Left colon (tissue), 2 donors: ENCODE measurements at regions of chr12 and their contacts with region 1.

Region 1: DNA sequence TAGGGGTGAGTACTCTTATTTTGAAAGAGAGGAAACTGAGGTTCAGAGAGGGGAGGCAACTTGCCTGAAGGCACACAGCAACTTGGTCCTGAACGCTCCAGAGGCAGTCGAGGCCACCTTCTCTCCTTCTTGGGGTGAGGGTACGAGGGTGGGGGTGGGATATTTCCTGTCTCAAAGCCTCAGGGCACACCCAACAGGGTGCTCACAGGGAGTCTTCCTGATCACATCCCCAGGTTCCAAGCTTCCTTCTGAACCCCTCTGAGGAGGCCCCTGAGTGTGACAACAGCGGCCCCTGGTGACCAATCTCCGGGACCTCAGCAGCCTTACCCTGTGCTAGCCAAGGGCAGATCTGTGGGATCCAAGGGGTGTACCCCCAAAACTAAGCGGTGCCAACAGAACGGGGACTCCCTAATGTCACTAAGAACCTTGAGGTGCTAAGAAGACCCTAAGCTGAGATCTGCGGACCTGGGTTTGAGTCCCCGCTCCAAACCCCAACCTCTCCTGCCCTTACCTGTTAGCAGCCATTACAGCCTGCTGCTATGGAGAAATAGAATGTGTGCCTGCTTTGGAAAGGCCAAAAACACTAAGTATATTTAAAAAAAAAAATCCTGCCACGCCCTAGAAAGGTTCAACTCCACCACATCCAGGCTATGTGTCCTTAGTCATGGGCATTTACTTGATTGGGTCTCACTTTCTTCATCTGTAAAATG is 57.9 kb downstream of the TRPV4 start:
- DNase-seq: peak; percentile 62 to 83
- ATAC-seq: peak; percentile 80

Region 2: GRCh38 chr12:109518820-109519665 is 256.3 kb before region 1 on chr12:
- intact Hi-C with region 1: loop called in 1 of 2 experiments (anchors 10 kb)
- DNase-seq: peak in 1 of 2 donors; percentile 74
- ATAC-seq: peak; percentile 82

Region 3: DNA sequence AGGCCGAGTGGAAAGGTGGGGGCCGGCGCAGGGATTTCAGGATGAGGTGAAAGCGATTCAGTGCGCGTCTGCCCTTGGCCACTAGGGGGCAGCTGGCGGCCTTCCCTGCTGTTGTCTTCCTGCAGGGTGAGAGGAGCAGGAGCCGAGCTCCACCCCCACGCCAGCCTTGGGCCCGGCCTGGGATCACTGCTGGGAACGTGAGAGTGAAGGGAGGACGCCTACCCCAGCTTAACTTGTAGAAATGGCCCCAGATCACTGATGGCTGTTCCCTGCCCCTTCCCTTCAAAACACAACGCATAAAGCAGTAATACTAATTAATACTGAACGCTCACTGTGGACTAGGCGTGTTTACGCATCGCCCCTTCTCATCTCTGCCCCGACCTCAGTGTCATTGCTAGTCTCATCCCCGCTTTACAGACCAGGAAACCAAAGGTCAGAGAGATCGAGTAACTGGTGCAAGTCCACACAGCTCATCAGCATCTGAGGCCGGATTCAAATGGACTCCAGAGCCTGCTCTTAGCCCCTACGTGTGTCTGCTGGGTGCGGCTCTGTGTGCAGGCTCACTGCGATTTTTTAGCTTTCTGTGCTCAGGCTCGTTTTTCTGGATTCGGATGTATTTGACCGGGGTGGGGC is 177.4 kb before region 1 on chr12:
- intact Hi-C with region 1: loop called (anchors 2 to 5 kb)
- DNase-seq: peak; percentile 81 to 84
- ATAC-seq: peak; percentile 96

Region 4: GRCh38 chr12:109706747-109707469 is 68.4 kb before region 1 on chr12:
- intact Hi-C with region 1: no loop called
- DNase-seq: peak; percentile 62 to 70
- ATAC-seq: peak; percentile 94

Region 5: DNA sequence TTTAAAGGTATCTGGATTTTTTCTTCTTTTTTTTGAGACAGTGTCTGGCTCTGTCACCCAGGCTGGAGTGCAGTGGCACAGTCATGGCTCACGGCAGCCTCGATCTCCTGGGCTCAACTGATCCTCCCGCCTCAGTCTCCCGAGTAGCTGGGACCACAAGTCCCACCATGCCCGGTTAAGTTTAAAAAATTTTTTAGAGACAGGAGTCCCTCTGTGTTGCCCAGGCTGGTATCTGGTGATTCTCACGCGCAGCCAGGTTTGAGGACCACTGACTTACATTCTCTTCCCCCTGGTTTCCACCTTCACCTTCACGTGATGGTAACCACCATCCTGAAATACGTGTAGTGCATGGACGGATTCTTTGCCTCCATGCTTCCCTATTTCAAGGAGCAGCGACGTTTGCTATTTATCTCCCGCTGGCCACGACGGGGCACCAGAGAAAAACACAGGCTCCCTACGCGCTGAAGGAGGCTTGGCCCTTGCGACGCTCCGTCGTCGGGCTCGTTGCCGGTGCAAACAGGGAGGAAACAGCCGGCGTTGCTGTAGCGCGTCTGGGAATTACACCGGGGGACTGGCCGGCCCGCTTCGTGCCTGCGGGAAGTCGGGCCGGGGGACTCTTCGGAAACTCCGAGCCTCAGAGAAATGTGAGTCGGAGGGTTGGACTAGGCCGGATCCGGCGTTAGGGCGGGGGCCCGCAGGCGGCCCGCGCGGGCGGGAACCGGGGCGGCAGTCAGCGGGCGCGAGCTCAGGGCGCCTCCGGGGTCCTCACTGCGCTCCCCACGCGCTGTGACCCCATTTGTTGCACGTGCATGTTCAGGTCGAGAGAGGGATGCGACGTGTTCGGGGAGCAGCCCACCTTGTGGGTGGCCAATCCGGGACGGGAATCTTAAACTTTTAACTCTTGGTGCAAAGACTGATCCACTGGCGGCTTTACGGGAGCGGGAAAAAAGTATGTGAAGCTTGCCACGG is 124.7 kb after region 1 on chr12 and contains the start of gene TCHP:
- intact Hi-C with region 1: no loop called
- DNase-seq: peak; percentile 86 to 88
- ATAC-seq: peak; percentile 95
- total RNA-seq, gene TCHP: 15.0 to 17.2 TPM